CD8-positive, alpha-beta T cell (primary cell): ENCODE measurements at regions of chr14 and their contacts with region 1.

Region 1: DNA sequence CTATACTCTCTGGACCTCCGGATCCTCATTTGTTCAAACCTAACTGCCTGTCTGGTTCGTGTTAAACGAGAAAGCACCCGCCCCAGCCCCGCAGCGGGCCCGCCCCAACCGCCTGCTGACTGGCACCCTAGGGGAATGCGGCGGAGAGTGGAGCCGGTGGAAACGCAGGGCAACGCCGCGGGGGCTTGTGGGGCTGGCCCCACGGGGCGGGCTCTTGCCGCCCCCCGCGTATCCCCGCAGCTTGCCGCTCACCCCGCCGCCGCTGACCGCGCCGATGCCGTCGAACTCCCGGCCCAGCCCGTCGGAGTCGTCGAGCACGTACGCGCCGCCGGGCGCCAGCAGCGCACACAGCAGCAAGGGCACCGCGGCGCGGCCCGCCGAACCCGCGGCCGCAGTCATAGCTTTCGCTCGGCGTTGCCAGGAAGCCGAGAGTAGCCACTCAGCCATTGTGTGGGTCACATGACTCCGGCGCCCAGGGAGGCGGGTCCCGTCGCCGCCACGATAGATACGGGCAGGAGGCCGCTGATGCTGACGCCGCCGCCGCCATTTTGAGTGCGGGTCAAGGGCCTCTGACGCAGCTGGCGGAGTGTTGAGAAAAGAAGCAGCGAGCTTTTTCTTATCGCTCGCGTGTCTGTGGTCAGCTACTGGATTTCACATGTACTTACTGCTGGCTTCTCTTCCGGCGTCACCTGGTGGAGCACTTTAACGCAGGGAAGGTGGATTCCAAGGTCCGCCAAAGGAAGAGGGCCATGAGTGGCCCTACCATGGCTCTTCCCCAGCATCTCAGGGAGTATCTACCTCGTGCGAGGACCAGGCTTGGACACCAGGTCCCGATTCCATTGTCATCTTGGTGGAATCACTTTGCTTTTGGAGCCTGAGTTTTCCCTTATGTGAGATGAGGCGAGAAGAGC is at the start of gene GALC:
- DNase-seq: peak; percentile 91 to 98 (median 95)
- ATAC-seq: peak; percentile 81
- H3K4me3 ChIP-seq: peak within 1 kb of the TSS; percentile 59 to 72
- H3K4me3 Mint-ChIP-seq: peak within 1 kb of the TSS; percentile 90
- H3K27ac ChIP-seq: peak within 1 kb of the TSS; percentile 83 to 96
- H3K27ac Mint-ChIP-seq: peak within 1 kb of the TSS; percentile 98
- H3K4me1 ChIP-seq: peaks cover 42% of the 10 kb centered on the region
- H3K4me1 Mint-ChIP-seq: peaks cover 73% of the 10 kb centered on the region
- H3K27me3 ChIP-seq: no peaks in the 10 kb centered on the region
- H3K27me3 Mint-ChIP-seq: no peaks in the 10 kb centered on the region
- CTCF ChIP-seq: peak; percentile 6
- total RNA-seq, gene GALC: 14.9 to 16.3 TPM

Region 2: DNA sequence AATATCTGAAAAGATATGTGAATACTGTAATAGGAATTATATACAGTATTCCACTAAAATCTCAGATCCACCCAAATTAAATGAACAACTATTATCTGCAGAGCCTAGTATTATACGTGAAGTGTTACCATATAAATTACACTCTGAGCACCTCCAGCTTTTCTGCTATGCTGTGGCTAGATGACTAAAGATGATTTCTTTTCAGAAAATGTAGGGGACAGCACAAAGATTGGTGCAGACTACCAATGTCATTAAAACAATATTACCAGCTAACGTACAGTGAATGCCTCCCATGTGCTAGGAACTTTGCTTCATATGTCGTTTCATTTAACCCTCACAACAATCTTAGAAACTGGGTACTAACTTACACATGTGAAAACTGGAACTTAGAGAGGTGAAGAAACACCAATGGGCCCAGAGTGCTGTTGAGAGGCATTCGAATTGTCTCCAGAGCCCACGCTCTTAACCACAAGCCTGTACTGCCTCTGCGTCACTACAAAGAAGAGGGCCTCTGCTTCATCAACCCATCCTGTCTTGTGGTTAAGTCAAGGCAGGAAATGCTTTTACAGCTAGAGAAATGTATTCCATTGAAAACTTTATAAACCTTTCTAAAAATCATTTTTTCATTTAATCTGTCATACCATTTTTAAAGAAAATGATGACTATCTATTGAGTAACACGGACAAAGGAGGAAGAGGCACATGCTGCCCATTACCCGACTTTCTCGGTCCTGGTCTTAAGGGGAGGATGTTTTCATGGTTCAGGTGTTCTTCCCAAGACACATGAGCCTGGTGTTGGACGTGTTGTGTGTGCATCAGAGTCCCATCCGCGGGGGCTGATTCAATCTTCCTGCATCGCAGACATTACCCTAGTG is 13.2 kb after region 1 on chr14:
- CTCF ChIA-PET with region 1: interaction called, 5 read pairs
- POLR2A ChIA-PET with region 1: interaction called, 62 read pairs
- intact Hi-C with region 1: loop called (anchors 1 kb)
- DNase-seq: peak; percentile 28 to 95 (median 66)
- ATAC-seq: peak; percentile 88
- H3K4me3 ChIP-seq: peak overlapping the region; percentile 69 to 76
- H3K4me3 Mint-ChIP-seq: peak overlapping the region; percentile 88
- H3K27ac ChIP-seq: peak overlapping the region; percentile 74 to 94
- H3K27ac Mint-ChIP-seq: peak overlapping the region; percentile 96
- H3K4me1 ChIP-seq: peaks cover 63% of the 10 kb centered on the region
- H3K4me1 Mint-ChIP-seq: peaks cover 81% of the 10 kb centered on the region
- H3K27me3 ChIP-seq: no peaks in the 10 kb centered on the region
- H3K27me3 Mint-ChIP-seq: no peaks in the 10 kb centered on the region
- CTCF ChIP-seq: no peak

Region 3: DNA sequence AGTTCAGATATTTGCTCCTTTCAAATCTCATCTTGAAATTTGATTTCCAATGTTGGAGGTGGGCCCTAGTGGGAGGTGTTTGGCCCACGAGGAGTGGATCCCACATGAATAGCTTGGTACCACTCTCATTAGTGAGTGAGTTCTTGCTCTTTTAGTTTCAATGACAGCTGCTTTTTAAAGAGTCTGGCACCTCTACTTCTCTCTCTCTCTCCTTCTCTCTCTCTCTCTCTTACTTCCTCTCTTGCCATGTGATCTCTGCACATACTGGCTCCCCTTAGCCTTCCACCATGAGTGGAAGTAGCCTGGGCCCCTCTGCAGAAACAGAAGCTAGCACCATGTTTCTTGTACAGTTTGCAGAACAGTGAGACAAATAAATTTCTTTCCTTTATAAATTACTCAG is 37.1 kb after region 1 on chr14:
- CTCF ChIA-PET with region 1: interaction called, 5 read pairs
- POLR2A ChIA-PET with region 1: interaction called, 10 read pairs
- intact Hi-C with region 1: no loop called
- DNase-seq: peak in 2 of 9 experiments; percentile 41 to 62
- ATAC-seq: peak; percentile 50
- H3K4me3 ChIP-seq: no peak overlapping the region
- H3K4me3 Mint-ChIP-seq: no peak overlapping the region
- H3K27ac ChIP-seq: peak overlapping the region in 1 of 2 experiments; percentile 10
- H3K27ac Mint-ChIP-seq: peak overlapping the region; percentile 86
- H3K4me1 ChIP-seq: peaks cover 52% of the 10 kb centered on the region
- H3K4me1 Mint-ChIP-seq: peaks cover 69% of the 10 kb centered on the region
- H3K27me3 ChIP-seq: no peaks in the 10 kb centered on the region
- H3K27me3 Mint-ChIP-seq: no peaks in the 10 kb centered on the region
- CTCF ChIP-seq: no peak

Region 4: DNA sequence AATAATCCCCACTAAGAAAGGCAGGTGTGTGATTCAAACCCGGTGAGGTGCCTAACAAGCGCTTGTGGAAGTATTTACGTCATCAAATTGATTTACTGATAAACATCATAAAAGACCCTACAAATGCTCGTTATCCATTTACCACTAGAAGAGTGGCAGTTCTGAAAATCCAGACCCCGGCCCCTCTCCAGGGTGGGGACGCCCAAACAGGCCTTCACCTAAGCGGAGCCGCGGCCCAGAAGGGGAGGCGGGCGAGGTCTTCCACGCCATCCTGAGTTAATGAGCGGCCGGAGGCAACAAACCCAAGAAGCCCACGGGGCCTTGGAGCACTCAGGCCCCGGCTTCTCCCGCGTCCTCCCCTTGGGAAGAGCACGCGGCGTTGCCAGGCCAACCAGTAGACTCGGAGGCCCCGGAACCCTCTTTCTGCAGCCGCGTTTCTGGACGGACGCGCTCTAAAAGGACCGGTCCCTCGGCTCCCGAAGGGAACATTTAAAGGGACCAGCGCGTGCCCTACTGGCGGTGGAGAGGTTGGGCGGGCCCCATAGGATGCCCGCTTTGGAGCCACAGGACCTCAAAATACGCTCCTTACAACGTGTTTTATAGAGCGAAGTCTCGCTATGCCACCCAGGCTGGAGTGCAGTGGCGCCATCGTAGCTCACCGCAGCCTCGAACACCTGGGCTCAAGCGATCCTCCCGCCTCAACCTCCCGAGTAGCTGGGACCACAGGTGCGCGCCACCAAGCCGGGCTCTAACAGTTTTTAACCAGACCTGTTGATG is 558.3 kb after region 1 on chr14:
- CTCF ChIA-PET with region 1: no interaction called
- POLR2A ChIA-PET with region 1: no interaction called
- intact Hi-C with region 1: loop called in 1 of 2 experiments (anchors 10 kb)
- DNase-seq: peak in 7 of 9 experiments; percentile 23 to 71 (median 40)
- ATAC-seq: no peak
- H3K4me3 ChIP-seq: peak overlapping the region; percentile 36 to 47
- H3K4me3 Mint-ChIP-seq: peak overlapping the region; percentile 64
- H3K27ac ChIP-seq: no peak overlapping the region
- H3K27ac Mint-ChIP-seq: no peak overlapping the region
- H3K4me1 ChIP-seq: peaks cover 20% of the 10 kb centered on the region
- H3K4me1 Mint-ChIP-seq: peaks cover 11% of the 10 kb centered on the region
- H3K27me3 ChIP-seq: peaks cover 36 to 42% of the 10 kb centered on the region in 2 experiments
- H3K27me3 Mint-ChIP-seq: peaks cover 45% of the 10 kb centered on the region
- CTCF ChIP-seq: no peak